A673 (cell line): ENCODE measurements at regions of chr3 and their contacts with region 1.

Region 1: GRCh38 chr3:90007778-90008499 is 900.5 kb downstream of the EPHA3 start:
- DNase-seq: peak; percentile 11
- H3K4me3 ChIP-seq: no peak overlapping the region
- H3K27ac ChIP-seq: no peak overlapping the region
- H3K4me1 ChIP-seq: no peaks in the 10 kb centered on the region
- H3K27me3 ChIP-seq: no peaks in the 10 kb centered on the region
- CTCF ChIP-seq: no peak

Region 2: DNA sequence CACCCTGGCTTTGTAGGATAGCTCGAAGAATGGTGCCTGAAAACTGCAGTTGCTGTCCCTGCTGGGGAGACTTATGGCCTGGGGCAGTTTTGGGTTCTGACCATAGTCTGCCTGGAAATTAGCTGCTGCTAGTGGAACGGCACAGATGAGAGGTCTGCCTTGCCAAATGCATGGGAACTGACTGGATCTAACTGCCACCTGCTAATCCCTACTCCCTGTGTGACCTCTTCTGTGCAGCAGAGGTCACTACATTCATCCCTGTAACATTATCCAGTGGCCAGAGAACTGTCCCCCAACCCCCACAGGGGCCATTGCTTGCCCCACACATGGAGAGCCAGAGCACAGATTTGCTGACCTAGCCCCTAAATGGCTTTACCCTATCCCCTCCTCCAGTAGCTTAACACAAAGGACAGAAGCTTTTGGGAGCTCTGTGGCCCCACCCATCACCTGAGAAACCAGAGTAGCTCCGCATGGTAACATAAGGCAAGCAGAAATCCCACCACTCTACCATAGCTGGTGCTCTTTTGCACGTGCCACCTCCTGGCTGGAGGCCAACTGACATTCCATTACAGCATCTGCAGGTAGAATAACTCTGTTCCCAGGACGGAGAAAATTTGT is 60.5 kb before region 1 on chr3:
- CTCF ChIA-PET with region 1: no interaction called
- POLR2A ChIA-PET with region 1: no interaction called
- intact Hi-C with region 1: no loop called
- DNase-seq: no peak
- H3K4me3 ChIP-seq: no peak overlapping the region
- H3K27ac ChIP-seq: no peak overlapping the region
- H3K4me1 ChIP-seq: no peaks in the 10 kb centered on the region
- H3K27me3 ChIP-seq: no peaks in the 10 kb centered on the region
- CTCF ChIP-seq: no peak

Region 3: DNA sequence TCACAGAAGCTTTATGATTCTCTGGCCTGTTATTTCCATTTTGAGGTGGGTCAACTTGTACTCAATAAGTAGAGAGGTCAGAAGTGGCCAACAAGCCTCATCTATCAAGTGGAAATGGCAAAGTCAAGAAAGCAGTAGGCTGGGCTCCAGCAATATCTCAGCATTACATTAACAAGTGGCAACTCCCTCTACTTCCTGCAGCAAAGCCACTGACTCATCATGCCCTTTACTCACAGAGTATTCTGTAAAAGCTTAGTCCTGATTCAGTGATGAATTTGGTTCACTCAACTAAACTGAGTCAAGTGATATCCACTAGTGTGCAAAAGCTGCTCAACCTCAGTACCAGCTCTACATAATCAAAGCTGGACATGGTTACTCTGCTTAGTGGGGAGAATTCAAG is 54.1 kb after region 1 on chr3:
- CTCF ChIA-PET with region 1: no interaction called
- POLR2A ChIA-PET with region 1: no interaction called
- intact Hi-C with region 1: loop called (anchors 10 kb)
- DNase-seq: peak; percentile 19
- H3K4me3 ChIP-seq: no peak overlapping the region
- H3K27ac ChIP-seq: no peak overlapping the region
- H3K4me1 ChIP-seq: no peaks in the 10 kb centered on the region
- H3K27me3 ChIP-seq: no peaks in the 10 kb centered on the region
- CTCF ChIP-seq: no peak